SK-N-SH (cell line): ENCODE measurements at regions of chr3 and their contacts with region 1.

Region 1: DNA sequence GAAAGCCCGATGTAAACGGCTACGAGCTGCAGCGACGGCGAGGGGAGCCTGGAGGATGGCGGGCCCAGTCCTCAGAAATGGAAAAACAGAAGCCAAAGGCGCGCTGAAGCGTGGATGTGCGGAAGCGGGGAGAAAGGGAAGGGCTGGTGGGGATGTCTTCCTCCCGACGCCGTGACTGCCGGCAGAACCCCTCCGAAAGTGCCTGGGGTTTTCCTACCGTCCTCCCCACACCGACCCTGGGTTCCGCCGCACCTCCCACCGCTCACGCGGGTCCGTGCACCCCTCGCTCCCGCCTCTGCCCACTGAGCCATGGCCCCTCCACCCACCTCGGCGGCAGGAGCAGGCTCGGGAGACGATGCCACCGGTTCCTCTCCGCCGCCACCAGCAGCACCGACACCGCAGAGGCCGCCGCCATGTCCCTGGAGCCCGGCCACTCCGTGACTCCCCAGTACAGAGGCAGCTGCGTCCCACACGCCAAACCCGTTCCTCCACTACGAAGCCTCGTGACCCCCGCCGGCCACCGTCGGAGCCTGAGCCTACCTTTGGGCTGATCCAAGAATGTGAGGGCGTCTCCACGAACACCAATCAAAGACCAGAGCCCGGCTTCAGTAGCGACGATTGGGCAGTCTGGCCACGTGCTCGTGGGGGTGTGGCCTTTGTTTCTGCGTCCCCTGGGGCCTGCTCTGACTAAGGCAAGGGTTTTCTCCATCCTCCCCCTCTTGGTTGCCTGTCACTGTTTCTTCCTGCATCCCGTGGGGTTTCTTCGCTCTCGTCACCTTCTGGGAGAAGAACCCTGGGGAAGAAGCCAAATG is at the start of gene MCCC1:
- DNase-seq: peak; percentile 97
- H3K4me3 ChIP-seq: peak within 1 kb of the TSS; percentile 96
- H3K27ac ChIP-seq: peak within 1 kb of the TSS; percentile 73 to 77
- H3K4me1 ChIP-seq: peaks cover 3 to 13% of the 10 kb centered on the region in 2 experiments; a peak in 2 of 4 replicates
- H3K27me3 ChIP-seq: no peaks in the 10 kb centered on the region
- CTCF ChIP-seq: no peak
- EP300 ChIP-seq: peak in 1 of 2 experiments; percentile 65; a peak in 1 of 4 replicates
- RAD21 ChIP-seq: peak; percentile 12; the same call in 1 of the 2 replicates
- polyA plus RNA-seq, gene MCCC1: 15.4 and 19.4 TPM in 2 replicates

Region 2: GRCh38 chr3:182925330-182925943 is 173.8 kb before region 1 on chr3:
- CTCF ChIA-PET with region 1: no interaction called
- POLR2A ChIA-PET with region 1: no interaction called
- DNase-seq: no peak
- H3K4me3 ChIP-seq: no peak overlapping the region
- H3K27ac ChIP-seq: no peak overlapping the region
- H3K4me1 ChIP-seq: peaks cover 0 to 4% of the 10 kb centered on the region in 2 experiments; a peak in 2 of 4 replicates
- H3K27me3 ChIP-seq: no peaks in the 10 kb centered on the region
- CTCF ChIP-seq: no peak
- EP300 ChIP-seq: no peak
- RAD21 ChIP-seq: no peak

Region 3: DNA sequence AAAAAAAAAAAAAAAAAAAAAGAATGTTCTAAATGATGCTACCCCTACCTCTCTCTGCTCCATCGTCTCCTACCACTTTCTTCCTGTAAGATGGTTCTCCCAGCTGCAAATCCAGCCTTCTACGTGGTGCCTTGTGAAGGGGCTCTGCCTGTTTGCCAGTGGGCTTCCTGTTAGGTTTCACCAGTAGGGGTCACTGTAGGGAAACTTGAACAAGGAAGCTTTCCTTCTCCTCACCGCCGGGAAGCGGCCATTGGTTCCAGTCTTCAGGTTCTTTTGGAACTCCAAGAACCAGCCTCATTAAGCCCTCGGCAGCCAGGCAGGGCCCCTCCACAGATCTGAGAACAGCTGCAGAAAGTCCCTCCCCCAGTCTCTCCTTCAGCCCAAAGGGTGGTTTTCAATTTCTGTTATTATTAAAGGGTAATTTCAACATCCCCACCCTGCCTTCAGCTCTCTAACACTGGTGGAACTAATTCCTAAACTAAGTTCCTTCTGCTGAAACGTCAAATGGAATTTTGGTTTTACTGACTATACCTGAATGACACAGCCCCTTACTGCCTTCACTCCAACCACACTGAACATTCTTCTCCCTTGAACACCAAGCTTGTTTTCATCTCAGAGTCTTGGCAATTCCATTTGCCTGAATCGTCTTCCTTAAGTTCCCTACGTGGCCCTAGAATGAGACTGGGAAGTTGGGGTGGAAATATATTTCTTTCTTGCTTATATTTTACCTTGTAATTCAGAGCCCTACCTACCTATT is 13.4 kb before region 1 on chr3:
- CTCF ChIA-PET with region 1: interaction called, 34 read pairs
- POLR2A ChIA-PET with region 1: no interaction called
- DNase-seq: peak; percentile 47
- H3K4me3 ChIP-seq: no peak overlapping the region
- H3K27ac ChIP-seq: no peak overlapping the region
- H3K4me1 ChIP-seq: no peaks in the 10 kb centered on the region
- H3K27me3 ChIP-seq: no peaks in the 10 kb centered on the region
- CTCF ChIP-seq: peak; percentile 57
- EP300 ChIP-seq: no peak
- RAD21 ChIP-seq: peak; percentile 42